ENCODE measurements at regions of chr16 and their contacts with region 1.

Region 1: DNA sequence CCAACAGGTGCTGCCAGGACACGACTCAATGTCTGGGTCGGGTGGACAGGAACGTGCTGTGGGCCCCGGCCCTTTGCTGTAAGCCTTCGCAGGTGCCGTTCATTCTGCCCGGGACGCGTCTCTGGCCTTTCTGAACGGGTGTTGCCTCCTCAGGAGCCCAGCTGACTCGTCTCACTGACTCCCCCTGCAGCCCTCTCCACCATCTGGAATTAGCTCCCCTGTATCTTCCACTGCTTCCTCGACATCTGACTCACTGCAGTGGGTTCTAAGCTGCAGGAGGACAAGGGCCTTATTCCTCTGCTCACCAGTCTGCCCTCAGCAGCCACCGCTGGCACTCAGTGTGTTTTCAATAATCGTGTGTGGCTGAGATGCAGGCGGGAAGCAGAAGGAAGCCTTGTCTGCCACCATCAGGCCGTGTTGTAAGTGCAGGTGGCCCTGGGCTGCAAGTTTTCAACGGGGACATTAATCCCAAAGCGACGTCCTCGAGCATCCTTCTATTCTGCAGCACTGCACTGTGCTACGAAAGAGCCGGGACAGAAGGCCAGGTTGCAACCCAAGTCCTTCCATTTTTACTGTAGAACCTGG is 256.2 kb downstream of the FOXL1 start:
- DNase-seq: no peak
- H3K4me3 ChIP-seq: no peak overlapping the region
- H3K27ac ChIP-seq: no peak overlapping the region
- H3K4me1 ChIP-seq: peaks cover 0 to 4% (median 0%) of the 10 kb centered on the region in 4 donors
- H3K27me3 ChIP-seq: peaks cover 4% of the 10 kb centered on the region
- CTCF ChIP-seq: no peak
- EP300 ChIP-seq: no peak
- POLR2A ChIP-seq: no peak

Region 2: GRCh38 chr16:86783636-86784626 is 50.6 kb before region 1 on chr16:
- in situ Hi-C with region 1: no loop called
- intact Hi-C with region 1: loop called (anchors 10 kb)
- DNase-seq: no peak
- H3K4me3 ChIP-seq: no peak overlapping the region
- H3K27ac ChIP-seq: no peak overlapping the region
- H3K4me1 ChIP-seq: no peaks in the 10 kb centered on the region
- H3K27me3 ChIP-seq: peaks cover 4% of the 10 kb centered on the region
- CTCF ChIP-seq: no peak
- EP300 ChIP-seq: no peak
- POLR2A ChIP-seq: no peak